ENCODE measurements at regions of chr5 and their contacts with region 1.

Region 1: DNA sequence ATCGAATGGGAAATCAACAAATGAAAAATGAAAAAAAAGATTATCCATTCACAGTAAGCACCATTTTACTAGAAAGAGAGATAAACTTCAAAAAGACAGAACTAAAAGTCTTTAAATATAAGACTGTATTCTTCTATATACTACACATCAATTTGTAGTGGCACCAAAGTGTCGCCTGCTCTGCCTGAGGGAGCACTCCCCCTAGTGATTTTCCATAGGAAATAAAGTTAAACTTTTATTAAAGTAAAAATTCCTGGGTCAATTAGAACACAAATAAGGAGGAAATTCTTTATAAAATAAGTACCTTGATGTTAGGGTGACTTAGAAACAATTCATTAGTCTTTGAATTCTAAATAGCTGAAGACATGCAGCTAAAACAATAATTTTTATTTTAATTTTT is 9.7 kb downstream of the RAD1 start:
- DNase-seq: no peak
- H3K4me3 ChIP-seq: no peak overlapping the region
- H3K27ac ChIP-seq: no peak overlapping the region
- H3K27me3 ChIP-seq: no peaks in the 10 kb centered on the region
- CTCF ChIP-seq: peak; percentile 53

Region 2: DNA sequence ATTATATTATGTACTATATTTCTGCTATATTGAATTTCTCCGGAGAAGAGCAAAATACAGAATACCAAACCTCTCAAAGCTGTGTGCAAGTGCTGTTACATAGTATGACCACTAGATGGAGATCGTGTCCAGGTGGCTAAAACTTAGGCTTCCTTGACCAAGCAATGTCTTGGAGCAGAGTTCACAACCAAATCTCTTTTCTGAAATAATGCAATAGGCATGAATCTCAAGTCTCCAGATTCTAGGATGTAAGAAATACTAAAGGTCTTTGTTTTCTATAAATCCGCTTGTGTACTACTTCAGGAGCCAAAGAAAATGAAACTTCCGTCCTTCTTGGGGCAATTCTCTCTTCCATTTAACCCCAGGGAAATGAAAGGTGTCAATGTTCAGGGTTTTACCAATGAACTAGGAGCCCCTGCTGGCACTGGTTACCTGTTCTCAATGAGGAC is 431.0 kb before region 1 on chr5:
- CTCF ChIA-PET with region 1: interaction called, 152 read pairs
- POLR2A ChIA-PET with region 1: no interaction called
- DNase-seq: peak; percentile 44
- H3K4me3 ChIP-seq: no peak overlapping the region
- H3K27ac ChIP-seq: no peak overlapping the region
- H3K27me3 ChIP-seq: no peaks in the 10 kb centered on the region
- CTCF ChIP-seq: peak; percentile 99

Region 3: GRCh38 chr5:34991486-34992238 is 86.1 kb after region 1 on chr5:
- CTCF ChIA-PET with region 1: no interaction called
- POLR2A ChIA-PET with region 1: no interaction called
- DNase-seq: no peak
- H3K4me3 ChIP-seq: no peak overlapping the region
- H3K27ac ChIP-seq: no peak overlapping the region
- H3K27me3 ChIP-seq: peaks cover 16% of the 10 kb centered on the region
- CTCF ChIP-seq: no peak